HepG2 (cell line): ENCODE measurements at regions of chr14 and their contacts with region 1.

Region 1: DNA sequence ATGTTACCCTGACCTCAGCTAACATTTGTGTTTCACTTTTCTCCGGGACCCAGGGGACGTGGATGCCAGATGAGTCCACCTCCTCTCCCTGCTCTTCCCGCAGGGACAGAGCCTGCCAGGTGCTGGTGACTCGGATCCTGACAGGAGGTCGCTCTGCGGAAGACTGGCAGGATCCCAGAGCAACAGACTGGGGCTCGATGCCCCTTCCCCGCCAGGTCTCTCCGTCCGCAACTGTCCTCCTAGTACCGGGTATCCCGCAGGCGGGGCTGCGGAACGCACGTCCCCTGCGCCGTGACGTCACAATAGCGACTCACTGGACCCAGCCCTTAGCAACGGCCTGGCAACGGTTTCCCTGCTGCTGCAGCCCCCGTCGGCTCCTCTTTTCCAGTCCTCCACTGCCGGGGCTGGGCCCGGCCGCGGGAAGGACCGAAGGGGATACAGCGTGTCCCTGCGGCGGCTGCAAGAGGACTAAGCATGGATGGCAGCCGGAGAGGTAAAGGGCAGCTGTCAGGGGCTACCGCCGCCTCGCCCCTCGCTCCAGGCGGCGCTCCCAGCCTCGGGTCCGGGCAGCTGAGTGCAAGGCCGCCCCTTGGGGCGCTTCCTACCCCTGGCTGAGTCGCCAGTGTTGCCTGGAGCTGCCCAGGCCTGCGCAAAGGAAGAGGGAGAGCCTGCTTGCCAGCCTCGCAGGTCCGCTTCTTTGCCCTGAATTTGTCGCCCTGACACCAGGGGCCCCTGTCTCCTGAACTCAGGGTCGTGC is at the start of gene SPATA7:
- DNase-seq: peak; percentile 83
- ATAC-seq: peak; percentile 97
- H3K4me3 ChIP-seq: peak within 1 kb of the TSS; percentile 81 to 90 (median 90)
- H3K27ac ChIP-seq: peak within 1 kb of the TSS; percentile 61
- H3K4me1 ChIP-seq: peaks cover 16% of the 10 kb centered on the region
- H3K27me3 ChIP-seq: no peaks in the 10 kb centered on the region
- CTCF ChIP-seq: peak; percentile 22; the same call in 1 of the 2 replicates
- EP300 ChIP-seq: no peak
- POLR2A ChIP-seq: peak; percentile 43 to 88; a peak in 3 of 4 replicates
- RAD21 ChIP-seq: peak; percentile 31; the same call in 1 of the 2 replicates
- total RNA-seq, gene SPATA7: 4.9 and 5.5 TPM in 2 replicates

Region 2: DNA sequence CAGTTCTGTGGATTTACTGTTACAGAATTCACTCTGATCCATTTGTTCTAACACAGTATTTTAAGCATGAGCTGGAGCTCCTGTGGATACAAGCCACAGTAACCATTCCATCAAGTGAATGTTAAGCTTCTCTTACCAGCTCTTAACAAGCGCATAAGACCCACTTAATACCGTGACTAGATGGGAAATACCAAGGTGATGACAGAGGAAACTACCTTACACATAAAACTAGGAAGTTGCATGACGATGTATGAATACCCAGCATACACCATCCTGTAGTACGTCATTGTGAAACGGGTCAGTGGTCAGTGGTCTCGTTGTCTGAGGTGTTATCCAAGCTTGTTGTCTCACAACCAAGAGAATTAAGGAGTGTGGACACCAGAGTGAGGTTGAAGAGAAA is 390.5 kb before region 1 on chr14:
- CTCF ChIA-PET with region 1: no interaction called
- POLR2A ChIA-PET with region 1: no interaction called
- in situ Hi-C with region 1: loop called (anchors 25 kb)
- intact Hi-C with region 1: loop called (anchors 5 kb)
- DNase-seq: peak; percentile 13
- ATAC-seq: peak; percentile 45
- H3K4me3 ChIP-seq: no peak overlapping the region; a peak in 1 of 6 replicates
- H3K27ac ChIP-seq: peak overlapping the region; percentile 70
- H3K4me1 ChIP-seq: peaks cover 41% of the 10 kb centered on the region
- H3K27me3 ChIP-seq: no peaks in the 10 kb centered on the region
- CTCF ChIP-seq: no peak
- EP300 ChIP-seq: no peak
- POLR2A ChIP-seq: no peak
- RAD21 ChIP-seq: no peak

Region 3: DNA sequence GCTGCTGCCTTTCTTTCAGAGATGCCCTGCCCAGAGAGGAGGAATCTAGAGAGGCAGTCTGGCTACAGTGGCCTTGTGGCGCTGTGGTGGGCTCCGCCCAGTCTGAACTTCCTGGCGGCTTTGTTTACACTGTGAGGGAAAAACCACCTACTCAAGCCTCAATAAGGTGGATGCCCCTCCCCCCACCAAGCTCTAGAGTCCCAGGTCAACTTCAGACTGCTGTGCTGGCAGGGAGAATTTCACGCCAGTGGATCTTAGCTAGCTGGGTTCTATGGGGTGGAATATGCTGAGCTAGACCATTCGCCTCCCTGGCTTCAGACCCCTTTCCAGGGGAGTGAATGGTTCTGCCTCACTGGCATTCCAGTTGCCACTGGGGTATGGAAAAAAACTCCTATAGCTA is 25.5 kb after region 1 on chr14:
- CTCF ChIA-PET with region 1: no interaction called
- POLR2A ChIA-PET with region 1: no interaction called
- in situ Hi-C with region 1: no loop called
- intact Hi-C with region 1: loop called (anchors 2 kb)
- DNase-seq: peak; percentile 67
- ATAC-seq: peak; percentile 75
- H3K4me3 ChIP-seq: no peak overlapping the region
- H3K27ac ChIP-seq: no peak overlapping the region
- H3K4me1 ChIP-seq: peaks cover 13% of the 10 kb centered on the region
- H3K27me3 ChIP-seq: no peaks in the 10 kb centered on the region
- CTCF ChIP-seq: no peak
- EP300 ChIP-seq: no peak
- POLR2A ChIP-seq: no peak
- RAD21 ChIP-seq: no peak

Region 4: GRCh38 chr14:88551094-88551870 is 165.8 kb after region 1 on chr14:
- CTCF ChIA-PET with region 1: no interaction called
- POLR2A ChIA-PET with region 1: no interaction called
- in situ Hi-C with region 1: no loop called
- intact Hi-C with region 1: loop called (anchors 10 kb)
- DNase-seq: no peak
- ATAC-seq: no peak
- H3K4me3 ChIP-seq: no peak overlapping the region
- H3K27ac ChIP-seq: no peak overlapping the region
- H3K4me1 ChIP-seq: peaks cover 29% of the 10 kb centered on the region
- H3K27me3 ChIP-seq: no peaks in the 10 kb centered on the region
- CTCF ChIP-seq: no peak
- EP300 ChIP-seq: no peak
- POLR2A ChIP-seq: no peak
- RAD21 ChIP-seq: no peak

Region 5: GRCh38 chr14:88737245-88737644 is 351.7 kb after region 1 on chr14:
- CTCF ChIA-PET with region 1: no interaction called
- POLR2A ChIA-PET with region 1: no interaction called
- in situ Hi-C with region 1: no loop called
- intact Hi-C with region 1: no loop called
- DNase-seq: no peak
- ATAC-seq: no peak
- H3K4me3 ChIP-seq: no peak overlapping the region
- H3K27ac ChIP-seq: no peak overlapping the region
- H3K4me1 ChIP-seq: no peaks in the 10 kb centered on the region
- H3K27me3 ChIP-seq: no peaks in the 10 kb centered on the region
- CTCF ChIP-seq: no peak
- EP300 ChIP-seq: no peak
- POLR2A ChIP-seq: no peak
- RAD21 ChIP-seq: no peak